Activated T-helper 1 cell treated with anti-CD3 and anti-CD28 coated beads, Interleukin-12 subunit alpha, Interleukin-12 subunit beta, Interleukin-2, Interleukin-4 antibody, amounts not matched to agents 30 ng/mL and 10 ng/mL and 1 ng/mL, durations not matched to agents 14 hours and 24 hours and 36 hours (primary cell): ENCODE measurements at regions of chr6 and their contacts with region 1.

Region 1: DNA sequence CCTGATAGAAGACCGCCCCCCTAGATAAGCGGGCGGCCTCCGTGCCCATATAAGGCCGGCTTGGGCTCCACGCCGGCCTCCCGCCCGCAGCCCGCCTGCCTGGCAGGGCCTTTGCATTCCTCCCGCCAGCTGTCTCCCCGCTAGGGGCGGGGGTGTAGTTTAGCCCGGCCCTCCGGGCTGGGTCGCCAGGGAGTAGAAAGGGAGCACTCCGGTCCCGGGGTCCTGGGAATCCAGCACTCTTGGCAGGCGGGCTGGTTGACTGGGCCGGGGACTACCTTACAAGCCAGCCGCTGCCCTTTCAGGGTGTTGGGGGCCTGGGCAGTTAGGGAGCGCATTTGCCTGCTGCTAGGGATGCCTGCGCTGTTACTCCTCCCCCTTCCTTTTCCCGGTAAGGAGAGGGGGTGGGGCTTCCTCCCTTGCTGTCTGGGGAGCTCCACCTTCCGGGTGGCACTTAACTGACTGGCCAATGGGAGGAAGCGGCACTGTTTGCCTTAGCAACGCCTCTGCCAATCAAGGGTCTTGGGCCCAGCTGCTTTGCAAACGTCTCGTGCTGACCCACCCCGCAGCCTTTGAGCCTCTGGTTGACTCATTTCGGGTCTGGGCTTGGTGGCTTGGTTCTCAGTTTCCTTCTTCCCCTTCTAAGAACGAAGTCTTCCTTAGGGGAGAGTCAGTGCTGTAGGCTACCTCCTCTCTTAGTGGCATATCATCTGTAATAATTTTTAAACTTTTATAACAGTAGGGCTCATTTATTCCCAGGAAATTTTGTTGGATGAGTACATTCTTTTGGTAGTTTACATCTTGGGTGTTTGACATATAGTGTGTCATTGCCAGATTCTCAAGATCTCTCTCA is 3.4 kb downstream of the SRF start:
- DNase-seq: peak; percentile 96
- H3K4me3 Mint-ChIP-seq: peak overlapping the region; percentile 94
- H3K27ac Mint-ChIP-seq: peak overlapping the region; percentile 82
- H3K4me1 Mint-ChIP-seq: peaks cover 44% of the 10 kb centered on the region
- H3K27me3 Mint-ChIP-seq: peaks cover 2% of the 10 kb centered on the region

Region 2: GRCh38 chr6:42572523-42572922 is 602.0 kb before region 1 on chr6:
- intact Hi-C with region 1: loop called (anchors 5 kb)
- DNase-seq: no peak
- H3K4me3 Mint-ChIP-seq: no peak overlapping the region
- H3K27ac Mint-ChIP-seq: no peak overlapping the region
- H3K4me1 Mint-ChIP-seq: peaks cover 46% of the 10 kb centered on the region
- H3K27me3 Mint-ChIP-seq: no peaks in the 10 kb centered on the region

Region 3: GRCh38 chr6:42928986-42929820 is 245.3 kb before region 1 on chr6 and contains the start of gene CNPY3:
- intact Hi-C with region 1: loop called (anchors 1 kb)
- DNase-seq: peak; percentile 93
- H3K4me3 Mint-ChIP-seq: peak within 1 kb of the TSS; percentile 99
- H3K27ac Mint-ChIP-seq: peak within 1 kb of the TSS; percentile 98
- H3K4me1 Mint-ChIP-seq: peaks cover 38% of the 10 kb centered on the region
- H3K27me3 Mint-ChIP-seq: no peaks in the 10 kb centered on the region
- total RNA-seq, gene CNPY3: 47.2 and 49.2 TPM in 2 replicates

Region 4: DNA sequence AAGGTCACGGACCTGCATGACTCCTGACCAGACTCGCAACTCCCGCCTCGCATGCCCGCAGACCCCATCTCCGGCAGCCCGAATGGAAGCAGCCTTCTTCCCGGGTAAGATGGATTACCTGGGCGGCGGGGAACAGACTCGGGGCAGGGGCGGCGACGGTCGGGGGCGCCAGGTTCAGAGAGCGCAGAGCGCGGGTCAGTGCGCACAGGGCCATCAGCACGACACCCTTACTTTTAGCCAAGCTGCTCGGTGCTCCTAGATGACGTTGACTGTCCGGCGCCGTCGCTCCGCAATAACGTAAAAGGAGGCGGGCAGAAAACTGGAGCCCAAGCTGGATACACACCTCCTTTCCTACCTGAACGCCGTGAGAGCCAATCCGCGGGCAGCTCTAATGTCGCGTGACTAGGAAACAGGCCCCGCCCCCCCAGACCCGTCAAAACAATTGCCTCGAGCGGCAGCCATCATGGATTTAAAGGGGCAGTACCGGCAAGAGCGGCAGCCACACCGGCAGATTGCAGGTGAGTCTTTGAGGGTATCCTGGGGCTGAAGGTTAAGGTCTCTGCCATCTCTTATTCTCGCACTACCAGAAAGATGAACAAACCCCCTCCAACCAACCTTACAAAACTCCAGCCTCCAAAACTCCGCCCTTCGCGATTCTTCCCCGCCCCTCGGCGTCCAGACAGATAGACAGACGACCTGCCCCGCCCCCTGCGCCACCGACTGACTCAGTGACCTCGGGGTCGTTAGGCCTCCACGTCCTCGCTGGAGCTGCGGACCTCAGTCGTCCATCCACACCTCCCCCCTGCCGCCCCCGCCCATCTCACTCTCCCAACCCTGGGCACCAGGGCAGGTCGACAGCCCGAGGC is 115.1 kb before region 1 on chr6 and contains the starts of genes KLC4 and MRPL2:
- intact Hi-C with region 1: loop called (anchors 1 kb)
- DNase-seq: peak; percentile 96
- H3K4me3 Mint-ChIP-seq: peak within 1 kb of the TSS; percentile 96
- H3K27ac Mint-ChIP-seq: peak within 1 kb of the TSS; percentile 98
- H3K4me1 Mint-ChIP-seq: peaks cover 41% of the 10 kb centered on the region
- H3K27me3 Mint-ChIP-seq: no peaks in the 10 kb centered on the region
- total RNA-seq, gene KLC4: 12.7 and 13.7 TPM in 2 replicates
- total RNA-seq, gene MRPL2: 89.6 and 97.4 TPM in 2 replicates

Region 5: DNA sequence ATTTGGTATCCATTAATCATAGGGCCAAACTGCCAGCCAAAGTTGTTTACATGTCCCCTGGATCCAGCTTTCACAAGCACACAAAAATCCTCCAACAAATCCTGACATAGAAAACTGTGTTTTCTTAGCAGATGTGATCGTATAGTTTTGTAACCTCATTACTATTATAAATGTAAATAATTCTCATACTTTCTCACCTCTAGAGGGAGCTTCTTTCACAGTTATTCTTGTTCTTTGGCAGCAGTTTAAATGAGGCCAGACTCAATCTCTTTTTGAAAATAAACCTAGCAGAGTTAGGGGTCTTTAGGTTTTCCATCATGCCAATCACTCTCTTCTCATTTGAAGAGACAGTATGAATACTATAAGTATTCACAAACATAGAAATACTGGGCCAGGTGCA is 212.0 kb after region 1 on chr6:
- intact Hi-C with region 1: loop called (anchors 2 kb)
- DNase-seq: no peak
- H3K4me3 Mint-ChIP-seq: no peak overlapping the region
- H3K27ac Mint-ChIP-seq: no peak overlapping the region
- H3K4me1 Mint-ChIP-seq: peaks cover 56% of the 10 kb centered on the region
- H3K27me3 Mint-ChIP-seq: peaks cover 43% of the 10 kb centered on the region

Region 6: GRCh38 chr6:43575772-43576551 is 401.5 kb after region 1 on chr6 and contains the starts of genes POLH and XPO5:
- intact Hi-C with region 1: loop called (anchors 5 kb)
- DNase-seq: peak; percentile 90
- H3K4me3 Mint-ChIP-seq: peak within 1 kb of the TSS; percentile 91
- H3K27ac Mint-ChIP-seq: peak within 1 kb of the TSS; percentile 86
- H3K4me1 Mint-ChIP-seq: peaks cover 43% of the 10 kb centered on the region
- H3K27me3 Mint-ChIP-seq: no peaks in the 10 kb centered on the region
- total RNA-seq, gene POLH: 35.7 and 39.1 TPM in 2 replicates
- total RNA-seq, gene XPO5: 135 and 149 TPM in 2 replicates